ENCODE measurements at regions of chr15 and their contacts with region 1.

Region 1: GRCh38 chr15:25684521-25685431 is 178.4 kb downstream of the ATP10A start:
- DNase-seq: no peak
- H3K4me3 Mint-ChIP-seq: no peak overlapping the region
- H3K27ac Mint-ChIP-seq: no peak overlapping the region
- H3K4me1 Mint-ChIP-seq: no peaks in the 10 kb centered on the region
- H3K27me3 Mint-ChIP-seq: no peaks in the 10 kb centered on the region

Region 2: DNA sequence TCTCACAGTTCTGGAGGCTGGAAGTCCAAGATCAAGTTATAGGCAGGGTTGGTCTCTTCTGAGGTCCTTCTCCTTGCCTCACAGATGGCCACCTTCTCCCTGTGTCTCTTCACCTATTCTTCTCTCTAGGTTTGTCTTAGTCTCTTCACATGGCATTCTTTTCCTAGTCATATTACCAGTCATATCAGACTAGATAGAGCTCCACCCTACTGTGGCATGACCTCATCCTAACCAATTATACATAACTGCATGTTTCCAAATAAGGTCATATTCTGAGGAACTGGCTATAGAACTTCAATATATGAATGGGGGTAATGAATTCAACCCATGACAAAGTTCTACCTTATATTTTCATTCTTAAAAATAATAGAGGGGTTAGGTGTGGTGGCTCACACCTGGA is 49.6 kb before region 1 on chr15:
- CTCF ChIA-PET with region 1: no interaction called
- intact Hi-C with region 1: loop called (anchors 10 kb)
- DNase-seq: no peak
- H3K4me3 Mint-ChIP-seq: no peak overlapping the region
- H3K27ac Mint-ChIP-seq: no peak overlapping the region
- H3K4me1 Mint-ChIP-seq: no peaks in the 10 kb centered on the region
- H3K27me3 Mint-ChIP-seq: no peaks in the 10 kb centered on the region